RWPE1 (cell line): ENCODE measurements at regions of chr5 and their contacts with region 1.

Region 1: DNA sequence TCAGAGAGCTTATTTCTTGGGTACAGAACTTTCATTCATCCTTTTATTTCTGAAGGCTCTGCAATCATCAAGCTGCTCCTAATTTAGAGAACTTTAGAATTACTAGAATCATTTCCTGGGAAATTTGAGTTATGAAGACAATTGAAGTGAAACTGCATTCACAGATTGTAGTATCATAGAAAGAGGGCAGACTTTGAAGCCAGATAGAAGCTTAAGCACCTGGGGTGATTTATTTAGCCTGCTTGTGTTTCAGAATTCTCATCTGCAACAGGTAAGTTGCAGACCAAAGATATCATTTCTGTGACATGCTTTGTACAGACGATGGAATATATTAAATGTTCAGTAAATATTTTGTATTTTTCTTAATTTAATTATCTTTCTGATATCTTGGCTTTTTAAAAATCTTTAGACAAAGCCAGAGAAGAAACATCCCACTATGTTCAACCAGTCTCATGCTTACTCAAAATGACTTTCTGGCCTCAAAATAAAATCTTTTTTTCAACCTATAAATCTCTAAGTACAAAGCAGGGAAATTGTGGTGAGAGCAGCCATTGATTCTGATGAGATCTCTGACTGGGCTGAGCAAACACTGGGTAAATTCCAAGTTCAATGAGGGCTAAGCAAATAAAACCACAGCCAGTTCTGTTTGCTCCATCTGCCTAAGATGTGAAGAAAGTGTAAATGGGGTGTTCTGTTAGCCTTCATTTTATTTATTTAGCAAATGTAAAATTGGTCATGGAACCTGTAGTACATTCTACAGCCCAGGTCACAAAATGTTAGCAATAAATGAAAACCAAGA is 264.7 kb upstream of the CCNG1 start:
- DNase-seq: no peak
- H3K27ac ChIP-seq: no peak overlapping the region
- CTCF ChIP-seq: no peak

Region 2: DNA sequence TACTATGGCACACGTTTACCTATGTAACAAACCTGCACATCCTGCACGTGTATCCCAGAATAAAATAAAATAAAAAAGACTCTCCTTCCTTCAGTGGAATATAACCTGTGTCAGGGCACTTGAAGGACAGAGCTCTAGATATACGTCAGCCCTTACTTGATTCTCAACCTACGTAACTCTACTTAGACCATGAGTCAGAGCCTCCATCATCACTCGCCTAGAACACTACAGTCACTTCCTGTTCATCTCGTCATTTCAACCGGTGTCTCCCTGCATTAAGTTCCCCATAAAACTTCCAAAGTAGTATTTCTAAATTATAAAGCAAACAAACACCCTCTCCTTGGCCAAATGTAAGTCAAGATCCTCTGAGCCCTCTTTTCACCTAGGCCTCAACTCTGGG is 21.1 kb after region 1 on chr5:
- CTCF ChIA-PET with region 1: interaction called, 11 read pairs
- POLR2A ChIA-PET with region 1: no interaction called
- DNase-seq: no peak
- H3K27ac ChIP-seq: no peak overlapping the region
- CTCF ChIP-seq: no peak

Region 3: DNA sequence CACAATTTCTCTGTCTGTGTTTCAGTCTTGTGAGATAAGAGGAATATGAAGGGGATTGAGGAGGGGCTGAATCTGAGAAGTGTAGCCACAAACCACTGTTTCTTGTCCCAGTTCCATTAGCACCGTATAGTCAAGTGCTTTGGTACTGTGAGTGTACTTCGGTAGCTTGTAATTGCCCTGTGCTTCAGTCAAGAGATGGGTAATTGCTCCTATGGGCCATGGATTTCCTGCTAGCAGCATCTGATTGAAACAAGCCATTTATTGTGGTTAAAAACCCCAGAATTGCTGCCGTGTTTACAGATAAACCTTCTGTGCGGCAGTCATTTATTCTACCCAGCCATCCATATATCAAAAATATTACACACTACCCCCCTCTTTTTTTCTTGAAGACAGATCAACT is 431.3 kb after region 1 on chr5:
- CTCF ChIA-PET with region 1: no interaction called
- POLR2A ChIA-PET with region 1: no interaction called
- DNase-seq: no peak
- H3K27ac ChIP-seq: no peak overlapping the region
- CTCF ChIP-seq: no peak